Activated naive CD4-positive, alpha-beta T cell treated with anti-CD3 and anti-CD28 coated beads for 36 hours (primary cell): ENCODE measurements at regions of chrX and their contacts with region 1.

Region 1: DNA sequence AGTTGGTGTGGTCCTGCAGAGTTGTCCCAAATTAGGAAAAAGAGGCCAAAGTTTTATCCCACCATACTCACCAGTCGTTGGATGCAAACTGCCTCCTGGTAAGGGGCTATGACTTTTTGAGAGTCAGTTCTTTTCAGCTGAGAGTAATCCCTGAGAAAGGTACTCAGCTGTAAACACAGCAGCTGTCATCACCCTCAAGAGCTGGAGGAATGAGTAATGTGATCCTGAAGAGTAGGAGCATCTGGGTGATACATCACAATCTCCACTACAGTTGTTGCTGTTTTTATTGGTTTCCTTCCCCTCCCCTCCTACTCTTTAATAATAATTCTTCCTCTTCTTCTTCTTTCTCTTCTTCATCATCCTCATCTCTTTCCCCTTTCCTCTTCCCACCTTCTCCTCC is 5.7 kb downstream of the MAGEE1 start:
- DNase-seq: no peak
- H3K4me3 Mint-ChIP-seq: no peak overlapping the region
- H3K27ac Mint-ChIP-seq: no peak overlapping the region
- H3K4me1 Mint-ChIP-seq: peaks cover 37% of the 10 kb centered on the region
- H3K27me3 Mint-ChIP-seq: no peaks in the 10 kb centered on the region

Region 2: GRCh38 chrX:74924449-74925225 is 1508.6 kb before region 1 on chrX:
- CTCF ChIA-PET with region 1: no interaction called
- intact Hi-C with region 1: loop called (anchors 10 kb)
- DNase-seq: peak; percentile 47
- H3K4me3 Mint-ChIP-seq: peak overlapping the region; percentile 95
- H3K27ac Mint-ChIP-seq: peak overlapping the region; percentile 87
- H3K4me1 Mint-ChIP-seq: peaks cover 6% of the 10 kb centered on the region
- H3K27me3 Mint-ChIP-seq: peaks cover 5% of the 10 kb centered on the region

Region 3: DNA sequence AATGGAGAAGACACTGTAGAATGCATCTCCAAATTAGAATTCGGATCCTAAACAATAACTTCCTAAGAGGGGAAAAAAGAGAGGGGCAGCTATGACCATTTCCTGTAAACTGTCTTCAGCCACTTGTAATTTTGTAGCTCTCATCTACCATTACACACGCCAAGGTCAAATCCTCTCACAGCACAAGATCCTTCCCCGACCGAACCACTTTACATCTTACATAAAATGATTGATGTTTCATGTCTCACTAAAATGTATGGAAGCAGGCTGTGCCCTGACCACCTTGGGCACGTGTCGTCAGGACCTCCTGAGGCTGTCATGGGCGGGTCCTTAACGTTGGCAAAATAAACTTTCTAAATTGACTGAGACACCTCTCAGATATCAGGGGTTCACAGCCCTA is 284.5 kb before region 1 on chrX:
- CTCF ChIA-PET with region 1: no interaction called
- intact Hi-C with region 1: loop called (anchors 5 kb)
- DNase-seq: peak; percentile 59
- H3K4me3 Mint-ChIP-seq: peak overlapping the region; percentile 80
- H3K27ac Mint-ChIP-seq: peak overlapping the region; percentile 98
- H3K4me1 Mint-ChIP-seq: peaks cover 9% of the 10 kb centered on the region
- H3K27me3 Mint-ChIP-seq: no peaks in the 10 kb centered on the region

Region 4: DNA sequence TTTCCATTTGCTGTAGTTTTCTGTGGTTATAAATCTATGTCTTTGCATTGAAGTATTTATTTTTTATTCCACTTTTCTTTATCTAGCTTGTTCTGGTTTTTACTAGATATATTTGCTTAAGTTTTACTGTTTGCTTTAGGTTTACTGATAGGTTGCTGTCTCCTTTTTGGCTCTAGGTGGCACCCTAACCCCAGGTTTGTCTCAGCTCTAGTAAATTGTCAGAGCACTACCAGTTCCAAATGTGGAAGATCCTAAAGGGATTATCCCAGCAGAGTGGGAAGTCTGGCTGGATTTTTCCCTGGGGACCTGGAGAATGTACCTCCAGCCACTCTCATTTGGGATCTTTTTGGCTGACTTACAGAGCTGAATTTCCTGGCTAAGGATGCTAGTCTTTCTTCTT is 154.2 kb before region 1 on chrX:
- CTCF ChIA-PET with region 1: no interaction called
- intact Hi-C with region 1: no loop called
- DNase-seq: peak; percentile 52
- H3K4me3 Mint-ChIP-seq: no peak overlapping the region
- H3K27ac Mint-ChIP-seq: no peak overlapping the region
- H3K4me1 Mint-ChIP-seq: no peaks in the 10 kb centered on the region
- H3K27me3 Mint-ChIP-seq: no peaks in the 10 kb centered on the region